Calu3 (cell line): ENCODE measurements at regions of chr11 and their contacts with region 1.

Region 1: GRCh38 chr11:727859-728748 is 19.2 kb upstream of the TALDO1 start:
- DNase-seq: peak; percentile 95
- H3K4me3 Mint-ChIP-seq: no peak overlapping the region
- H3K27ac Mint-ChIP-seq: peak overlapping the region; percentile 33
- H3K4me1 Mint-ChIP-seq: peaks cover 8% of the 10 kb centered on the region
- H3K27me3 Mint-ChIP-seq: no peaks in the 10 kb centered on the region
- CTCF ChIP-seq: peak; percentile 97

Region 2: DNA sequence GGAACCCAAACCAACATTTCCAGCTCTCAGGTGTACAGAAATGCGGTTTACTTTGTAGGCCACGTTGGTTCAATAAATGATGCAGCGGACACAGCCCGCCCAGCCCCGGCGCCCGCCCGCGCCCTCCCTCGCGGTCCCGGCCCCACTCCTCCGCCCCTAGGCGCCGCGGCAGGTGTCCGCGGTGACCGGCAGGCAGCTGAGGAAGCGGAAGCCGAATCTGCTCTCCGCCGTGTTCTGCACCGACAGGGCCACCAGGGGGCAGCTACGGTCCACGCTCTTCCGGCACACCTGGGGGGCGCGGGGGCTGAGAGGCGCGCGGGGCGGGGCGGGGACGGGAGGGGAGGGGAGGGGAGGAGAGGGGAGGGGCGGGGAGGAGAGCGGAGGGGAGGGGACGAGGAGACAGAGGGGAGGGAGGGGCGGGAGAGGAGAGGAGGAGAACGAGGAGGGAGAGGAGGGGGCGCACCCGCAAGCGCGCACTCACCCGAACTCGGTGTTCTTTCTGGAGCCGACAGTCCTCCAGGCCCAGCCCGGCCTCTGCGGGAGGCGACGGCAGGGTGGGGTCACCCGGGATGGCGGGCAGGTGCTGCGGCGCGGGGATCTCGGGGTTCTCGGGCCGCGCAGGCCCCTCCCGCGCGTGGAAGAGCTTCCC is 173.2 kb before region 1 on chr11:
- CTCF ChIA-PET with region 1: interaction called, 3 read pairs
- intact Hi-C with region 1: loop called (anchors 10 kb)
- DNase-seq: peak; percentile 81
- H3K4me3 Mint-ChIP-seq: peak overlapping the region; percentile 54
- H3K27ac Mint-ChIP-seq: no peak overlapping the region
- H3K4me1 Mint-ChIP-seq: no peaks in the 10 kb centered on the region
- H3K27me3 Mint-ChIP-seq: no peaks in the 10 kb centered on the region
- CTCF ChIP-seq: peak; percentile 72

Region 3: GRCh38 chr11:695538-696248 is 32.4 kb before region 1 on chr11 and contains the start of gene TMEM80:
- CTCF ChIA-PET with region 1: interaction called, 11 read pairs
- intact Hi-C with region 1: loop called (anchors 1 kb)
- DNase-seq: peak; percentile 98
- H3K4me3 Mint-ChIP-seq: peak within 1 kb of the TSS; percentile 77
- H3K27ac Mint-ChIP-seq: peak within 1 kb of the TSS; percentile 93
- H3K4me1 Mint-ChIP-seq: peaks cover 12% of the 10 kb centered on the region
- H3K27me3 Mint-ChIP-seq: no peaks in the 10 kb centered on the region
- CTCF ChIP-seq: no peak
- total RNA-seq, gene TMEM80: 21.2 and 29.9 TPM in 2 replicates